Naive thymus-derived CD4-positive, alpha-beta T cell (primary cell): ENCODE measurements at regions of chr9 and their contacts with region 1.

Region 1: GRCh38 chr9:6645355-6646292 is at the start of gene GLDC:
- DNase-seq: peak; percentile 6 to 44 (median 23)
- ATAC-seq: peak; percentile 83
- H3K4me3 ChIP-seq: peak within 1 kb of the TSS; percentile 62
- H3K4me3 Mint-ChIP-seq: peak within 1 kb of the TSS; percentile 86 to 92 (median 87)
- H3K27ac ChIP-seq: no peak within 1 kb of the TSS
- H3K27ac Mint-ChIP-seq: peak within 1 kb of the TSS in 6 of 9 donors; percentile 31 to 84 (median 48)
- H3K4me1 ChIP-seq: peaks cover 9 to 11% of the 10 kb centered on the region in 2 donors
- H3K4me1 Mint-ChIP-seq: peaks cover 18 to 25% (median 22%) of the 10 kb centered on the region in 7 donors
- H3K27me3 ChIP-seq: peaks cover 17 to 18% of the 10 kb centered on the region in 2 donors
- H3K27me3 Mint-ChIP-seq: peaks cover 51 to 81% (median 60%) of the 10 kb centered on the region in 5 donors
- total RNA-seq, gene GLDC: 0.56 to 2.2 (median 2.0) TPM in 3 of 5 experiments, not detected in the others

Region 2: GRCh38 chr9:6598249-6598725 is 47.3 kb before region 1 on chr9:
- CTCF ChIA-PET with region 1: no interaction called
- POLR2A ChIA-PET with region 1: no interaction called
- intact Hi-C with region 1: loop called in 1 of 2 experiments (anchors 5 kb)
- DNase-seq: peak in 1 of 9 donors; percentile 26
- ATAC-seq: no peak
- H3K4me3 ChIP-seq: no peak overlapping the region
- H3K4me3 Mint-ChIP-seq: no peak overlapping the region
- H3K27ac ChIP-seq: no peak overlapping the region
- H3K27ac Mint-ChIP-seq: peak overlapping the region in 1 of 9 donors; percentile 60
- H3K4me1 ChIP-seq: no peaks in the 10 kb centered on the region
- H3K4me1 Mint-ChIP-seq: peaks cover 0 to 5% (median 0%) of the 10 kb centered on the region in 7 donors
- H3K27me3 ChIP-seq: no peaks in the 10 kb centered on the region
- H3K27me3 Mint-ChIP-seq: peaks cover 0 to 4% (median 0%) of the 10 kb centered on the region in 5 donors

Region 3: GRCh38 chr9:6616951-6617602 is 28.5 kb before region 1 on chr9:
- CTCF ChIA-PET with region 1: no interaction called
- POLR2A ChIA-PET with region 1: no interaction called
- intact Hi-C with region 1: no loop called
- DNase-seq: no peak
- ATAC-seq: no peak
- H3K4me3 ChIP-seq: no peak overlapping the region
- H3K4me3 Mint-ChIP-seq: no peak overlapping the region
- H3K27ac ChIP-seq: no peak overlapping the region
- H3K27ac Mint-ChIP-seq: no peak overlapping the region
- H3K4me1 ChIP-seq: no peaks in the 10 kb centered on the region
- H3K4me1 Mint-ChIP-seq: no peaks in the 10 kb centered on the region
- H3K27me3 ChIP-seq: no peaks in the 10 kb centered on the region
- H3K27me3 Mint-ChIP-seq: peaks cover 0 to 5% (median 4%) of the 10 kb centered on the region in 5 donors